Caco-2 (cell line): ENCODE measurements at regions of chr17 and their contacts with region 1.

Region 1: DNA sequence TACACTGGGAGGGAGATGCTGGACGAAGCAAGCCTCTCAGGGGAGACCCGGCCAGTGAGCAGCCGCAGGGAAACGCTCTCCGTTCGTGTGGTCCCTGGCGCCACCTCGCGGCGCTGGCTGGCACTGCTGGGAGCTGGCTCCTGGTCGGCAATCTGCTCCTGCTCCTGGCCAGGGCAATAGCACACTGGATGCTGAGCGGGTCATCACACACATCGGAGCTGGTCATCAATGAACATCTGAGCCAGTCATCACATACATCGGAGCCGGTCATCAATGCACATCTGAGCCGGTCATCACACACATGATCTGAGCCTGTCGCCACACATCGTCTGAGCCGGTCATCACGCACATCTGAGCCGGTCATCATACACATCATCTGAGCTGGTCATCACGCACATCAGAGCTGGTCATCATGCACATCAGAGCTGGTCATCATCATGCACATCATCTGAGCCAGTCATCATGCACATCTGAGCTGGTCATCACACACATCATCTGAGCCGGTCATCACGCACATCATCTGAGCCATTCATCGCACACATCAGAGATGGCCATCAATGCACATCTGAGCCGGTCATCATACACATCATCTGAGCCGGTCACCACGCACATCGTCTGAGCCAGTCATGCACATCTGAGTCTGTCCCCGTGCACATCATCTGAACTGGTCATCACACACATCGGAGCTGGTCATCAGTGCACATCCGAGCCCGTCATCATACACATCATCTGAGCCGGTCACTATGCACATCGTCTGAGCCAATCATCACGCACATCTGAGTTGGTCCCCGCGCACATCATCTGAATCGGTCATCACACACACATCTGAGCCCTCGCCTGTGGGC is 217.3 kb downstream of the RBFOX3 start:
- DNase-seq: peak; percentile 76 to 89
- H3K4me3 ChIP-seq: no peak overlapping the region
- H3K4me3 Mint-ChIP-seq: no peak overlapping the region
- H3K27ac Mint-ChIP-seq: no peak overlapping the region
- H3K4me1 ChIP-seq: no peaks in the 10 kb centered on the region
- H3K4me1 Mint-ChIP-seq: no peaks in the 10 kb centered on the region
- H3K27me3 ChIP-seq: no peaks in the 10 kb centered on the region; the same call in none of the 2 replicates
- H3K27me3 Mint-ChIP-seq: peaks cover 47% of the 10 kb centered on the region
- CTCF ChIP-seq: peak; percentile 89 to 96

Region 2: DNA sequence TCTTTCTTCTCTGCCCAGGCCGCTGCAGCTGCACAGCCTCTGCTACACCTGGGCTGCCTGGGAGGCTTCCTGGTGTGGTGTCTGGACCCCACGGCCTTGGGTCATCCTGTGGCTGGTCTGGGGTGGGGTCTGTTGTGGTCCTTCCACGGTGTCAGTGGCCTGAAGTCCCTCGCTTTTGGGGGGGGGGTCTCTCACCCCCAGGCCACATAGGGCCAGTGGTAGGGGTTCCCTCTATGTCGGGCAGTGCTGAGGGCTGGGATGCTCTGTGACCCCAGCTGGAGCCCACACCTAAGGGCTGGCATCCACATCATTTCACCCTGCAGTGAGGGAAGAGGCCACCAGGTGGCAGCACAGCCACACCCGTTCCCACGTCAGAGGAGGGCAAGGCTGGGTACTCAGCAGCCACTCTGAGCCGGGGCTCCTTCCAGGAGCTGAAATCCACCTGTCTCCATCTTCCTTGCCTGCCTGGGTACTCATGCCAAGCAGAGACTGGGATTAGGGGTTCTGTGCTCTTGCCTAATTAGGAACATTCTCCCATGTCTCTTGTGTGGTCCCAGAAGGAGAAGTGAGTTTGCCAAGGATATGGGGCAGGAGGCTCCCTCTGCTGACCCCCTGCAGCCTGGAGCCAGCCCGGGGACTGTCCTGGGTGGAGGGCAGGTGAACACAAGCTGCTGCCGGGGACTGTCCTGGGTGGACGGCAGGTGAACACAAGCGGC is 306.0 kb before region 1 on chr17:
- CTCF ChIA-PET with region 1: interaction called, 18 read pairs
- POLR2A ChIA-PET with region 1: no interaction called
- intact Hi-C with region 1: loop called (anchors 1 kb)
- DNase-seq: peak; percentile 69 to 86
- H3K4me3 ChIP-seq: no peak overlapping the region
- H3K4me3 Mint-ChIP-seq: no peak overlapping the region
- H3K27ac Mint-ChIP-seq: no peak overlapping the region
- H3K4me1 ChIP-seq: no peaks in the 10 kb centered on the region
- H3K4me1 Mint-ChIP-seq: no peaks in the 10 kb centered on the region
- H3K27me3 ChIP-seq: no peaks in the 10 kb centered on the region
- H3K27me3 Mint-ChIP-seq: no peaks in the 10 kb centered on the region
- CTCF ChIP-seq: peak; percentile 84 to 95

Region 3: GRCh38 chr17:79104898-79105600 is 288.5 kb before region 1 on chr17:
- CTCF ChIA-PET with region 1: interaction called, 10 read pairs
- POLR2A ChIA-PET with region 1: no interaction called
- intact Hi-C with region 1: no loop called
- DNase-seq: no peak
- H3K4me3 ChIP-seq: no peak overlapping the region
- H3K4me3 Mint-ChIP-seq: no peak overlapping the region
- H3K27ac Mint-ChIP-seq: no peak overlapping the region
- H3K4me1 ChIP-seq: no peaks in the 10 kb centered on the region
- H3K4me1 Mint-ChIP-seq: no peaks in the 10 kb centered on the region
- H3K27me3 ChIP-seq: no peaks in the 10 kb centered on the region; the same call in 1 of the 2 replicates
- H3K27me3 Mint-ChIP-seq: peaks cover 13% of the 10 kb centered on the region
- CTCF ChIP-seq: no peak

Region 4: DNA sequence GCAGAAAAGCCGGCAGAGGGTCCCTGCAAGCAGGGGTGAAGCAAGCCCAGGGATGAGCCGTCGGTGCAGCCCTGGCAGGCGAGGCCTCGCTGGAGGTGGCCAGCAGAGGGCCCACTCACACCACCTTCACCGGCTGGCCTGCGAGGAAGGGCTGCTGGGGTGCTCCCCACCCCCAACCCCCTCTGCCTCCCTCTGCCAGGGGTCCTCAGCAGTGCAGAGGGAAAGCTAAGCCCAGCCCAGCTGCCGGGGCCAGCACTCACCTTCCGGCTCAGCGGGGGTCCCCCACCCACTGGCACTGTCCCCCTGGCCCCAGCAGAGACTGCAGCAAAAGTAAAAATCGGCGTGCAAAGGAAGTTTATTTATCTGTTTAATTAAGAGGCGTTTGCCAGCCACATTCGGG is 205.5 kb before region 1 on chr17:
- CTCF ChIA-PET with region 1: interaction called, 5 read pairs
- POLR2A ChIA-PET with region 1: no interaction called
- intact Hi-C with region 1: loop called (anchors 1 kb)
- DNase-seq: peak in 1 of 2 experiments; percentile 60
- H3K4me3 ChIP-seq: no peak overlapping the region
- H3K4me3 Mint-ChIP-seq: no peak overlapping the region
- H3K27ac Mint-ChIP-seq: no peak overlapping the region
- H3K4me1 ChIP-seq: no peaks in the 10 kb centered on the region
- H3K4me1 Mint-ChIP-seq: no peaks in the 10 kb centered on the region
- H3K27me3 ChIP-seq: peaks cover 6% of the 10 kb centered on the region
- H3K27me3 Mint-ChIP-seq: peaks cover 50% of the 10 kb centered on the region
- CTCF ChIP-seq: peak; percentile 56 to 63

Region 5: GRCh38 chr17:79365836-79366770 is 27.5 kb before region 1 on chr17:
- CTCF ChIA-PET with region 1: no interaction called
- POLR2A ChIA-PET with region 1: no interaction called
- intact Hi-C with region 1: no loop called
- DNase-seq: no peak
- H3K4me3 ChIP-seq: no peak overlapping the region
- H3K4me3 Mint-ChIP-seq: no peak overlapping the region
- H3K27ac Mint-ChIP-seq: no peak overlapping the region
- H3K4me1 ChIP-seq: no peaks in the 10 kb centered on the region
- H3K4me1 Mint-ChIP-seq: no peaks in the 10 kb centered on the region
- H3K27me3 ChIP-seq: peaks cover 6% of the 10 kb centered on the region
- H3K27me3 Mint-ChIP-seq: peaks cover 48% of the 10 kb centered on the region
- CTCF ChIP-seq: no peak

Region 6: GRCh38 chr17:79633993-79634813 is 240.6 kb after region 1 on chr17:
- CTCF ChIA-PET with region 1: no interaction called
- POLR2A ChIA-PET with region 1: no interaction called
- intact Hi-C with region 1: no loop called
- DNase-seq: peak in 1 of 2 experiments; percentile 14
- H3K4me3 ChIP-seq: no peak overlapping the region
- H3K4me3 Mint-ChIP-seq: no peak overlapping the region
- H3K27ac Mint-ChIP-seq: no peak overlapping the region
- H3K4me1 ChIP-seq: peaks cover 24% of the 10 kb centered on the region
- H3K4me1 Mint-ChIP-seq: peaks cover 19% of the 10 kb centered on the region
- H3K27me3 ChIP-seq: no peaks in the 10 kb centered on the region
- H3K27me3 Mint-ChIP-seq: peaks cover 5% of the 10 kb centered on the region
- CTCF ChIP-seq: no peak